ENCODE measurements at regions of chr7 and their contacts with region 1.

Region 1: DNA sequence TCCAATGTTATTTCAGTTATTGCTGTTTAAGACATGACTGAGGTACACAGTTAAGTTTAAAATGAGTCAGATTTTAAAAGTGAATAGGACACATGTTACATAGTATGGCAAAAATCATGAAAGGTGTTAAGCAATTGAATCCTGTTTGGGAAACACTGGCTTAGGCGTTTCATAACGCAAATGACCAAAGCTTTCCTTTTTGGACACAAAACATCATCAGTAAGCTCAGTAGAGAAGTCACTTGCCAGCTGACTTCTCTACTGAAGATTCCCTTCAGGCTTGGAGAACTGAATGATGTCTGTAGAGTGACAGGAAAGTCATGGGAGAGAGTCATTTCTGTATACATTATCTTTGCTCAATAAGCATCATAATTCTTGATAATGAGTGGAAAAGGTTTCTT is 64.4 kb upstream of the RSBN1L start:
- DNase-seq: no peak
- ATAC-seq: no peak
- H3K4me3 ChIP-seq: no peak overlapping the region
- H3K27ac ChIP-seq: no peak overlapping the region
- H3K4me1 ChIP-seq: no peaks in the 10 kb centered on the region
- H3K27me3 ChIP-seq: no peaks in the 10 kb centered on the region
- CTCF ChIP-seq: no peak
- POLR2A ChIP-seq: no peak
- RAD21 ChIP-seq: no peak

Region 2: DNA sequence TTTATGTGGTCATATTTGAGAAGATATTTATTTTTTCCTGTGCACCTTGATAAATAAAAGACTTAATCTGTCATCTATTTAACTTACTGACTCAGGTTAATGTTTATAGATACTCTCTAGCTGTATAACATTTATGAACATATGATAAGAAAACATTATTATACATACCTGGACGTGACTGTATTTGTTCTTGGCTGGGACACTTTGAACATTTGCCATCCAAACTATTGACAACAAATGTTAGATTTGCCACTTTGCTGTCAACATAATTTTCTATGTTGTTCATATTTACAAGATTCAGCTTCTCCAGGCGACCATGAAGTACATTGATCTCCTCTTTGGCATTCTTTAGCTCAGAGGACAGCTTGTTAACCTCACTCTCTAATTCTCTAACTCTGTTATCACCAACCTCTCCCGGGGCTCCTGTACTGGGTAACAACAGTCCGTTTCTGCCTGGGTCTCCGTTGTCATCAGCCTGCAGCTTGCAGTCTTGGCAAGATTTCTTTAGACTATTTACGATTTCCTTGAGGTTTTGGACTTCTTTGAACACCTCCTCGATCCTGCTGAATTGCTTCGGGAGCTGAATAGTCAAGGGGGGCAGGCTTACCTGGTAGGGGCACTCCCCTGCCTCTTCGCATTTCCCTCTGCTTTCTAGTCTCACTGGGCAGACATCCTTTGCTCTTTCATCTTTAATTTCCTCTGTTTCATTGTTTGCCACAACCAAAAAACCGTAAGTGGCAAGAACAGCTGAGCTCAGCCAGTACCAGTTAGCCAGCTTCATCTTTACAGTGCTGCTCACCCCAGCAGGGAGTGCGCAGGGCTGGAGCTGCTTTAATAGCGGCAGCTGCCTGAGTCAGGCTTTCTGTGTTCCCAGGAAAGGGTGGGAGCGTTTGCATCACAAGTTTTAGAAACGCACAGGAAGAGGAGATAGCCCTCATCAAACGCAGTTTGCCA is 432.5 kb before region 1 on chr7 and contains the start of gene FGL2:
- CTCF ChIA-PET with region 1: no interaction called
- POLR2A ChIA-PET with region 1: no interaction called
- RAD21 ChIA-PET with region 1: no interaction called
- intact Hi-C with region 1: no loop called
- DNase-seq: no peak
- ATAC-seq: no peak
- H3K4me3 ChIP-seq: no peak within 1 kb of the TSS
- H3K27ac ChIP-seq: no peak within 1 kb of the TSS
- H3K4me1 ChIP-seq: no peaks in the 10 kb centered on the region
- H3K27me3 ChIP-seq: no peaks in the 10 kb centered on the region
- CTCF ChIP-seq: no peak
- POLR2A ChIP-seq: no peak
- RAD21 ChIP-seq: no peak
- total RNA-seq, gene FGL2: not detected

Region 3: DNA sequence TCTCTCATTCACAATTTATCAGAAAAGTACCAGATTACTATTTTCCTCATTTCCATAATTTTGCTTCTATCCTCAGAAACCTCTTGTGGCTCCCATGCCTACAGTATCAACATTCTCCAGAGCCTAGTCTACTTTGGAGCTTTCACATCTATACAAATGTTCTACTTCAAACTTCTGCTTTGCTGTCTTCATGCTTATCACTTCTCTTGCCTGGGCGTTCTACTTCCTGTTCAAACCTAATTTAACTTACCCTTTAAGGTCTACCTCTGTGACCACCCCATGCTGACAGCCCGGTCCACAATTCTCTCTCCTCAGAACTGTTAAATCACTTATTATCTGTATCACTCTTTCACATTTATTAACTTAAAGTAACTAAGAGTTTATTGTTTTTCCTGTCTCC is 100.8 kb before region 1 on chr7:
- CTCF ChIA-PET with region 1: no interaction called
- POLR2A ChIA-PET with region 1: no interaction called
- RAD21 ChIA-PET with region 1: no interaction called
- intact Hi-C with region 1: no loop called
- DNase-seq: no peak
- ATAC-seq: no peak
- H3K4me3 ChIP-seq: no peak overlapping the region
- H3K27ac ChIP-seq: no peak overlapping the region
- H3K4me1 ChIP-seq: peaks cover 4 to 5% of the 10 kb centered on the region in 2 experiments; a peak in 3 of 4 replicates
- H3K27me3 ChIP-seq: no peaks in the 10 kb centered on the region
- CTCF ChIP-seq: no peak
- POLR2A ChIP-seq: no peak
- RAD21 ChIP-seq: no peak

Region 4: DNA sequence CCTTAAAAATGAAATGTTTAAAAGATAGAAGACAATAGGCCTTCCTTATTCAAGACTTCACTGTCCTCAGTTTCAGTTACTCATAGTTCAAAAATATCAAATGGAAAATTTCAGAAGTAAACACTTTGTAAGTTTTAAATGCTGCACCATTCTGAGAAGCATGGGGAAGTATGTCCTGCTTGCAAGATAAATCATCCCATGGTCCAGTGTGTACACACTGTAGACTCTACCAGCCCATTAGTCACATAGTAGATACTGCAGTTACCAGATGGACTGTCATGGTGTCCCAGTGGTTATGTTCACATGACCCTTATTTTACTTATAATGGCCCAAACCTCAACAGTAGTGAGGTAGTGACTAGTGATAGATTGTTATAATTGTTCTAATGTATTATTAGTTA is 25.3 kb before region 1 on chr7:
- CTCF ChIA-PET with region 1: no interaction called
- POLR2A ChIA-PET with region 1: no interaction called
- RAD21 ChIA-PET with region 1: no interaction called
- intact Hi-C with region 1: no loop called
- DNase-seq: no peak
- ATAC-seq: no peak
- H3K4me3 ChIP-seq: no peak overlapping the region
- H3K27ac ChIP-seq: no peak overlapping the region
- H3K4me1 ChIP-seq: peaks cover 0 to 7% of the 10 kb centered on the region in 2 experiments; a peak in 1 of 4 replicates
- H3K27me3 ChIP-seq: no peaks in the 10 kb centered on the region
- CTCF ChIP-seq: no peak
- POLR2A ChIP-seq: no peak
- RAD21 ChIP-seq: no peak

Region 5: DNA sequence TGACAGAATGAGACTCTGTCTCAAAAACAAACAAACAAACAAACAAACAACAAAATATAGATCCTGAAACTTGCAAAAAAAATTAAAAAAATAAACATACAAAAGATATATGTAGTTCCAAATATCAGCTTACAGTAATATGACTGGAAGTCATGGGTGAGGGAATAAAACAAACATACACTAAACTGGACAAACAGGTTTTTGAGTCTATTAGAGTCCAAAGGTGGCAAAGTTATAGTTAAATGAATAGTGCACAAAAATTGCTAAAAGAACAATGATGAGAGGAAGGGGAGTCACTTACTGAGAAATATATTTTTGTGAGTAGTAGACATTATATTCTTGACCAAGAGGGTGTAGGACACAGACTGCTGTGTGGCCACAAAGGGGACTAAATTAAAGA is 47.8 kb after region 1 on chr7:
- CTCF ChIA-PET with region 1: no interaction called
- POLR2A ChIA-PET with region 1: no interaction called
- RAD21 ChIA-PET with region 1: no interaction called
- intact Hi-C with region 1: loop called (anchors 1 kb)
- DNase-seq: no peak
- ATAC-seq: peak; percentile 50; the same call in 1 of the 2 replicates
- H3K4me3 ChIP-seq: peak overlapping the region in 1 of 2 experiments; percentile 18; a peak in 1 of 4 replicates
- H3K27ac ChIP-seq: peak overlapping the region; percentile 23; the same call in 1 of the 2 replicates
- H3K4me1 ChIP-seq: peaks cover 26 to 28% of the 10 kb centered on the region in 2 experiments
- H3K27me3 ChIP-seq: no peaks in the 10 kb centered on the region
- CTCF ChIP-seq: no peak
- POLR2A ChIP-seq: no peak
- RAD21 ChIP-seq: no peak

Measured in HCT116 (cell line).